PC-3 (cell line): ENCODE measurements at regions of chr14 and their contacts with region 1.

Region 1: GRCh38 chr14:79278798-79279644 is 932.3 kb downstream of the DIO2 start:
- DNase-seq: peak; percentile 93
- ATAC-seq: peak; percentile 96
- H3K4me3 ChIP-seq: peak overlapping the region; percentile 82
- H3K27ac ChIP-seq: peak overlapping the region; percentile 31
- H3K4me1 ChIP-seq: peaks cover 15% of the 10 kb centered on the region; the same call in 1 of the 2 replicates
- H3K27me3 ChIP-seq: no peaks in the 10 kb centered on the region
- CTCF ChIP-seq: no peak

Region 2: GRCh38 chr14:79011091-79011919 is 267.7 kb before region 1 on chr14:
- CTCF ChIA-PET with region 1: no interaction called
- POLR2A ChIA-PET with region 1: no interaction called
- intact Hi-C with region 1: loop called (anchors 5 kb)
- DNase-seq: peak; percentile 85
- ATAC-seq: peak; percentile 97
- H3K4me3 ChIP-seq: peak overlapping the region; percentile 23; the same call in 1 of the 2 replicates
- H3K27ac ChIP-seq: peak overlapping the region; percentile 88
- H3K4me1 ChIP-seq: peaks cover 14% of the 10 kb centered on the region
- H3K27me3 ChIP-seq: no peaks in the 10 kb centered on the region
- CTCF ChIP-seq: peak; percentile 47

Region 3: DNA sequence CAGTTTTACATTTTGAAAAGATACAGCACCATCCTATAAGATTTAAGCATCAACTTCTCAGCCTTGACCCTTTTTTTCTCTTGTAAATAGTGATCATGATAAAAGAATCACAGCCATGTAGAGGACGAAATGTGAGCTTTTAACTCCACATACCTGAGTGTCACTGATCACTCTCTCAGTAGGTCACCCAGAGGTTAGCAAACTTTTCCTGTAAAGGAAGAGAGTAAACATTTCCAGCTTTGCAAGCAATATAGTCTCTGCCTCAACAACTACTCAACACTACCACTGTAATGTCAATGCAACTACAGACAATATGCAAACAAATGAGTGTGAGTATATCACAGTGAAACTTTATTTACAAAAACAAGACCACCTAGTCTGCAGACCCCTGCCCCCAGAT is 20.1 kb after region 1 on chr14:
- CTCF ChIA-PET with region 1: no interaction called
- POLR2A ChIA-PET with region 1: no interaction called
- intact Hi-C with region 1: no loop called
- DNase-seq: no peak
- ATAC-seq: no peak
- H3K4me3 ChIP-seq: no peak overlapping the region
- H3K27ac ChIP-seq: no peak overlapping the region
- H3K4me1 ChIP-seq: no peaks in the 10 kb centered on the region
- H3K27me3 ChIP-seq: no peaks in the 10 kb centered on the region
- CTCF ChIP-seq: no peak

Region 4: DNA sequence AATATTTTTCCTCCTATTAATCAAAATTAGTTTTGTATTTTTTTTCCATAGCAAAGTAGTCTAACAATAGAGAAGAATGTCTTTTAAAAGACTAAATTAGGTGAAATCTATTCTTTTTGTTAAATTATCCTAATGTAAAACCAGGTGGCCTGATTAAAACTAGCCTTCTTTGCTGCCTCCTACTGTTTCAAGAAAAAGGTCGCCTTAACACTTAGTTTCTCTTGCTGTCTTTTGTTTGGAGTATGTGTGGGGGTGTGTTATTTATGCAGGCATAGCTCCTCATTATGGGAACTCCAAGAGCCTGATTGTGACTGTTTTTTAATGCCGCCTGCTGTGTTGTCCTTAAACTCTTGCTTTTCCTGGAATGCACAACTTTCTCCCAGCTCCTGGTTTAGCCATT is 77.0 kb after region 1 on chr14:
- CTCF ChIA-PET with region 1: no interaction called
- POLR2A ChIA-PET with region 1: no interaction called
- intact Hi-C with region 1: loop called (anchors 2 kb)
- DNase-seq: peak; percentile 25
- ATAC-seq: no peak; the same call in 1 of the 2 replicates
- H3K4me3 ChIP-seq: no peak overlapping the region
- H3K27ac ChIP-seq: no peak overlapping the region
- H3K4me1 ChIP-seq: no peaks in the 10 kb centered on the region
- H3K27me3 ChIP-seq: no peaks in the 10 kb centered on the region
- CTCF ChIP-seq: peak; percentile 48; the same call in 1 of the 2 replicates

Region 5: DNA sequence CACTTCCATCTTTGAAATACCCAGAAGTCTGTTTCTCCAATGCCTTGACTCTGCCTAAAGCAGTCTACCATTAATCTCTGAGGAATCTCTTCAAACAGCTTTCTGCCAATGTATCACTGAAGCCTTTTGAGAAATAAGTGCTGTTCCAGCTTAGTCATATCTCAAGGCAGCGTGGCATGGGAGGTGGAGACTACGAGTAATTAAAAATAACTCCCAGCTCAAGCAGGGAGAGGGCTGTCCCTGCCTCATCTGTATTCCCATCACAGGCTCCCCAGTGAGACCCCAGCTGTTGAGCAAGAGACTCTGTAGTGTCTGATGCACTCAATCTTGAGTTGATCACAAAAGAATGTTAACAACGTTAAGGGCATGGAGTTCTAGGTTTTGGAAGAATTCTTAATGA is 231.6 kb after region 1 on chr14:
- CTCF ChIA-PET with region 1: no interaction called
- POLR2A ChIA-PET with region 1: no interaction called
- intact Hi-C with region 1: no loop called
- DNase-seq: peak; percentile 15
- ATAC-seq: no peak
- H3K4me3 ChIP-seq: no peak overlapping the region
- H3K27ac ChIP-seq: no peak overlapping the region
- H3K4me1 ChIP-seq: peaks cover 22% of the 10 kb centered on the region
- H3K27me3 ChIP-seq: no peaks in the 10 kb centered on the region
- CTCF ChIP-seq: no peak

Region 6: GRCh38 chr14:79543971-79544697 is 265.1 kb after region 1 on chr14:
- CTCF ChIA-PET with region 1: interaction called, 3 read pairs
- POLR2A ChIA-PET with region 1: no interaction called
- intact Hi-C with region 1: loop called (anchors 2 kb)
- DNase-seq: peak; percentile 82
- ATAC-seq: peak; percentile 97
- H3K4me3 ChIP-seq: no peak overlapping the region
- H3K27ac ChIP-seq: peak overlapping the region; percentile 25; the same call in 1 of the 2 replicates
- H3K4me1 ChIP-seq: peaks cover 8% of the 10 kb centered on the region; the same call in 1 of the 2 replicates
- H3K27me3 ChIP-seq: no peaks in the 10 kb centered on the region
- CTCF ChIP-seq: peak; percentile 72

Region 7: DNA sequence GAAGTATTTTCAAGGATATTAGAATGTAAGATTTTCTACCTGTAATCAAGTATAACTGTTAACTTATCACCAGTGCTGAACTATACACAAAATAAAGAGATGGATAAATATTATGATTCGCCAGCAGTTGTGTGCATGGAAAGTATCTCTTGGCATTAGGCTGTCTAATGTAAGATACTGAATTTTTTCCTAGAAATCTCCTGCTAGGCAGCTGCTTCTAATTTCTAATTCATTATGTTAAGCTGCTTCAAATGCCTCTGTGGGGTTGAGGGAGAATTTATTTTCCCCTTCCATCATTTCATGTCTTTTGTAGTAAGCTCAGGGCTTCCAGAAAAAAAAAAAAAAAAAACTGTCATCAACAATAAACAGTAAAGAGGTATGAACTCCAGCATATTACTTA is 416.3 kb after region 1 on chr14:
- CTCF ChIA-PET with region 1: no interaction called
- POLR2A ChIA-PET with region 1: no interaction called
- intact Hi-C with region 1: no loop called
- DNase-seq: no peak
- ATAC-seq: no peak
- H3K4me3 ChIP-seq: no peak overlapping the region
- H3K27ac ChIP-seq: no peak overlapping the region
- H3K4me1 ChIP-seq: no peaks in the 10 kb centered on the region
- H3K27me3 ChIP-seq: no peaks in the 10 kb centered on the region
- CTCF ChIP-seq: no peak

Region 8: DNA sequence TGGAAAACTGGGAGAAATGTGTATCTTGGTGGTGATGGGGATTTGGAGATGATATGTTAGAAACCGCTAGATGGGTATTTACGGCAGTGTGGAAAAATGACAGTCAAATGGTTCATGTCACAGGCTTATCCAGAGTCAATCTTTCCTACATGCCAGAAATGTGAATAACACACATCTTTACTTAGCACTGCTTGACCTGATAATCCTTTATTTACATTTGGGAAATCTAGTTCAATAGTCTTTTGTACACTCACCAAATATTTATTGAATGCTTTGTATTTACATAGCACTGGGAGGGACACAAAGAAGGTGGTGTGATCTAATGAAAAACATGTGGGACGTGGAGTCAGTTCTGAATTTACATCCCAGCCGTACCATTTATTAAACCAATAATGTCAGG is 724.1 kb after region 1 on chr14:
- CTCF ChIA-PET with region 1: no interaction called
- POLR2A ChIA-PET with region 1: no interaction called
- intact Hi-C with region 1: loop called (anchors 10 kb)
- DNase-seq: peak; percentile 89
- ATAC-seq: peak; percentile 90
- H3K4me3 ChIP-seq: no peak overlapping the region; the same call in 1 of the 2 replicates
- H3K27ac ChIP-seq: peak overlapping the region; percentile 73
- H3K4me1 ChIP-seq: peaks cover 19% of the 10 kb centered on the region
- H3K27me3 ChIP-seq: no peaks in the 10 kb centered on the region
- CTCF ChIP-seq: no peak